IMR-90 (cell line): ENCODE measurements at regions of chr14 and their contacts with region 1.

Region 1: GRCh38 chr14:75864352-75864751 is 117.4 kb downstream of the TGFB3 start:
- DNase-seq: peak; percentile 92
- ATAC-seq: peak; percentile 42
- H3K4me3 ChIP-seq: no peak overlapping the region
- H3K27ac ChIP-seq: no peak overlapping the region
- H3K4me1 ChIP-seq: peaks cover 29% of the 10 kb centered on the region
- H3K27me3 ChIP-seq: no peaks in the 10 kb centered on the region
- CTCF ChIP-seq: no peak
- POLR2A ChIP-seq: no peak
- RAD21 ChIP-seq: no peak

Region 2: GRCh38 chr14:75822522-75823141 is 41.7 kb before region 1 on chr14:
- CTCF ChIA-PET with region 1: no interaction called
- POLR2A ChIA-PET with region 1: no interaction called
- dilution Hi-C with region 1: no loop called
- in situ Hi-C with region 1: no loop called
- intact Hi-C with region 1: loop called (anchors 5 kb)
- DNase-seq: peak; percentile 85
- ATAC-seq: peak; percentile 92
- H3K4me3 ChIP-seq: no peak overlapping the region
- H3K27ac ChIP-seq: no peak overlapping the region
- H3K4me1 ChIP-seq: peaks cover 16% of the 10 kb centered on the region
- H3K27me3 ChIP-seq: no peaks in the 10 kb centered on the region
- CTCF ChIP-seq: no peak
- POLR2A ChIP-seq: no peak
- RAD21 ChIP-seq: no peak

Region 3: DNA sequence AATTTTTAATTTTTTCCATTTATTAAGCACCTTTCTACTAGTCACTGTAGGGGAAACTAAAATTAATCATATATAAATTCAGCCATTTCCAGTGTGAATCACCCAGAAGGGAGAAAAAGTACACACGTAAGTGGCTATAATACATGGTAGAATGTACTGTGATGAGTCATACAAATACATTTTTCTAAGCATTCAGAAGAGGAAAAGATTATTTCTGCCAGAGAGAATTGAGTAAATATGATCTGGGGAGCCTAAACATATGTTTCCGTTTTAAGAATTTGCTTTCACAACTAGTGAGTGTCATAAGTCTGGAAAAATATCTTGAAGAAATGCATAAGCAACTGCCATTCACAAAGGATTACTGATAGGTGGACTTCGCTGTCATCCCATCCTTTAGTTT is 14.7 kb after region 1 on chr14:
- CTCF ChIA-PET with region 1: interaction called, 4 read pairs
- POLR2A ChIA-PET with region 1: no interaction called
- dilution Hi-C with region 1: no loop called
- in situ Hi-C with region 1: no loop called
- intact Hi-C with region 1: loop called (anchors 2 kb)
- DNase-seq: peak; percentile 97
- ATAC-seq: peak; percentile 79
- H3K4me3 ChIP-seq: no peak overlapping the region
- H3K27ac ChIP-seq: 0 out of 2 replicates have a peak overlapping the region, but pooled peaks have one; percentile 12
- H3K4me1 ChIP-seq: peaks cover 21% of the 10 kb centered on the region
- H3K27me3 ChIP-seq: no peaks in the 10 kb centered on the region
- CTCF ChIP-seq: no peak
- POLR2A ChIP-seq: no peak
- RAD21 ChIP-seq: no peak

Region 4: GRCh38 chr14:75982266-75983018 is 118.1 kb after region 1 on chr14:
- CTCF ChIA-PET with region 1: interaction called, 3 read pairs
- POLR2A ChIA-PET with region 1: no interaction called
- dilution Hi-C with region 1: no loop called
- in situ Hi-C with region 1: no loop called
- intact Hi-C with region 1: loop called (anchors 5 kb)
- DNase-seq: peak; percentile 77
- ATAC-seq: peak; percentile 72
- H3K4me3 ChIP-seq: peak overlapping the region; percentile 50
- H3K27ac ChIP-seq: peak overlapping the region; percentile 66
- H3K4me1 ChIP-seq: peaks cover 7% of the 10 kb centered on the region; the same call in 1 of the 2 replicates
- H3K27me3 ChIP-seq: no peaks in the 10 kb centered on the region; the same call in 1 of the 2 replicates
- CTCF ChIP-seq: peak; percentile 72
- POLR2A ChIP-seq: peak; percentile 7; the same call in 1 of the 2 replicates
- RAD21 ChIP-seq: peak; percentile 81